Activated T-helper 1 cell treated with anti-CD3 and anti-CD28 coated beads, Interleukin-12 subunit alpha, Interleukin-12 subunit beta, Interleukin-2, Interleukin-4 antibody, amounts not matched to agents 30 ng/mL and 10 ng/mL and 1 ng/mL, durations not matched to agents 14 hours and 24 hours and 36 hours (primary cell): ENCODE measurements at regions of chr14 and their contacts with region 1.

Region 1: DNA sequence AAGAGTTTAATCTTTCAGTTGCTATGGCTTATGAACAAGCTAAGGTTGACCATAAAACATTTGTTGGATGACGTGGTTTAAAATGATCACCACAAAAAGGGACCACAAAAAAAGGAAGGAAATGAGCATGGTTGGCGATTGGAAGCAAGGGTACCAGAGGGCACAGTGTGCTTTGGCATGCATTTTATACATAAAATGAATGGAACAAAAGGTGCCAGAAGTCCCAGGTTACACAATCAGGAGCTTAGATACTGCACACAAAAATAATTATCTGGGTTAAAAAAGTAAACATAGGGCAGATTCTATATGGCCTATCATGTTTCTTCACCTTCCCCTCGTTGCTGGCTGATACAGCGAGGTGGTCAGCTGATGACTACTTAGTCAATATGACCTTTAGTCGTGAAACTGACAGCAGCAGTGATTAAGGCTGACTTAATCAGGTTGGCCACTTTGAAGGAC is 50.7 kb downstream of the ZC3H14 start:
- DNase-seq: no peak
- H3K4me3 Mint-ChIP-seq: no peak overlapping the region
- H3K27ac Mint-ChIP-seq: no peak overlapping the region
- H3K4me1 Mint-ChIP-seq: no peaks in the 10 kb centered on the region
- H3K27me3 Mint-ChIP-seq: no peaks in the 10 kb centered on the region

Region 2: DNA sequence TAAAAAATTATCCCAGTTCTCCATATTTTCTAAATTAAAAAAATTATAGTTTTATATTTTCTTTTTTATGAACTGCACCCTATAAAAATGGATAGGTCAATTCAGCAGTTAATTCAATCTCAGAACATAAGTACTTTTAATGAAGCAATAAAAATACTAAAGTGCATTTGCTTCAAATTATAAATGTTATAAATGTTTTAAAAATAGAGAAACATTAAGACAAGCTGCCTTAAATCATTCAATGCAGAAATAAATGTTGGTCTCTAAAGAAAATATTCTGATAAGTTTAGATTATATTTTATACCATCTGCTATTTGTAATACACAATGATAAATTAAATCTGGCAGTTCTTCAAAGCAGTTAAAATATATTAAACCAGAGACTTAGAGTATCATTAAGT is 14.9 kb after region 1 on chr14:
- intact Hi-C with region 1: loop called (anchors 2 kb)
- DNase-seq: no peak
- H3K4me3 Mint-ChIP-seq: no peak overlapping the region
- H3K27ac Mint-ChIP-seq: no peak overlapping the region
- H3K4me1 Mint-ChIP-seq: no peaks in the 10 kb centered on the region
- H3K27me3 Mint-ChIP-seq: no peaks in the 10 kb centered on the region